WTC11 (cell line): ENCODE measurements at regions of chr11 and their contacts with region 1.

Region 1: GRCh38 chr11:111982019-111982464 is 43.2 kb upstream of the DLAT start:
- DNase-seq: peak; percentile 83
- ATAC-seq: peak; percentile 62
- H3K4me3 Mint-ChIP-seq: peak overlapping the region; percentile 68
- H3K27ac Mint-ChIP-seq: peak overlapping the region; percentile 100
- H3K4me1 Mint-ChIP-seq: peaks cover 50% of the 10 kb centered on the region
- H3K27me3 Mint-ChIP-seq: no peaks in the 10 kb centered on the region
- CTCF ChIP-seq: peak; percentile 51

Region 2: GRCh38 chr11:111870886-111871692 is 111.0 kb before region 1 on chr11 and contains the start of gene ALG9:
- CTCF ChIA-PET with region 1: interaction called, 51 read pairs
- POLR2A ChIA-PET with region 1: interaction called, 6 read pairs
- DNase-seq: peak; percentile 76
- ATAC-seq: peak; percentile 90
- H3K4me3 Mint-ChIP-seq: peak within 1 kb of the TSS; percentile 89
- H3K27ac Mint-ChIP-seq: peak within 1 kb of the TSS; percentile 39
- H3K4me1 Mint-ChIP-seq: peaks cover 12% of the 10 kb centered on the region
- H3K27me3 Mint-ChIP-seq: no peaks in the 10 kb centered on the region; the same call in 1 of the 2 replicates
- CTCF ChIP-seq: no peak
- total RNA-seq, gene ALG9: 19.7 to 20.9 TPM (median 20.6 TPM) in 3 replicates

Region 3: DNA sequence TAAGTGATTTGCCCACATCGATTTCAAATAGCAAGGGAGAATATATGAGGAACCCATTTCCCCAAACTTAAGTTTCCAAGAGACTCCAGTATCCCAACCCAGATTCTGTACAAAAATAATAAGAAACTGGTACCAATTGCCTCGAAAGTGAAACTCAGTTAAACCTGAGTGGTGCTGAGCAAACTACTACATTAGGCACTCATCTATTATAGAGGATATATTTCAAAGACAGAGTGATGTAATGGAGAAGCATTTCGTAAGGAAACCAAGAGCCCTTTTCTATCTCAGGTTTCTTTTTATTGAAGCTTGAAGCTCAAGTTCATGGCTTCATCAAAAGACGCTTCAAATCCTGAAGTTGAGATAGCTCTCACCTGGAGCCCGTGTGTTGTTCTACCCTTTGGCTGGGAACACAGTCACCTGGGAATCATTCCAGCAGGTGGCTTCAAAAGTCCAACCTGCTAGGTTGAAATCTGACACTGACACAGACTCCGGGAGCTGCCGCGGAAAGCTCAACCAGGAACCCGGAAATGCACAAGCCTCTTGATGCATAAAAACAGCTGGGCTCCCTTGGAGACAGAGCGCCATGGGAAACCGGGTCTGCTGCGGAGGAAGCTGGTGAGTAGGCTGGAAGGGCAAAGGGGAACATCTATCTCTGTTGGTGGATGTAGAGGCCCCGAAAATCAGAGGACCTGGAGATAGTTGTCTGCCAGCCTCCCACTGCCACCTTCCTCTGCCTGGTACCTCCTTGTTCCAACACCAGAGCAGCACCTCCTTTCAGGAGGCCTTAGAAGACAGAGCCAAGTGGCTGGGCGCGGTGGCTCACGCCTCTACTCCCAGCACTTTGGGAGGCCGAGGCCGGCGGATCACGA is 63.4 kb before region 1 on chr11 and contains the start of gene C11orf52:
- CTCF ChIA-PET with region 1: interaction called, 34 read pairs
- POLR2A ChIA-PET with region 1: interaction called, 7 read pairs
- DNase-seq: peak; percentile 80
- ATAC-seq: peak; percentile 97
- H3K4me3 Mint-ChIP-seq: peak within 1 kb of the TSS; percentile 57
- H3K27ac Mint-ChIP-seq: peak within 1 kb of the TSS; percentile 85
- H3K4me1 Mint-ChIP-seq: peaks cover 42% of the 10 kb centered on the region
- H3K27me3 Mint-ChIP-seq: no peaks in the 10 kb centered on the region; the same call in 1 of the 2 replicates
- CTCF ChIP-seq: no peak
- total RNA-seq, gene C11orf52: 2.1 to 4.2 TPM (median 3.0 TPM) in 3 replicates

Region 4: GRCh38 chr11:111932611-111932950 is 49.5 kb before region 1 on chr11:
- CTCF ChIA-PET with region 1: interaction called, 159 read pairs
- POLR2A ChIA-PET with region 1: interaction called, 21 read pairs
- DNase-seq: no peak
- ATAC-seq: no peak
- H3K4me3 Mint-ChIP-seq: no peak overlapping the region
- H3K27ac Mint-ChIP-seq: no peak overlapping the region
- H3K4me1 Mint-ChIP-seq: peaks cover 19% of the 10 kb centered on the region
- H3K27me3 Mint-ChIP-seq: no peaks in the 10 kb centered on the region
- CTCF ChIP-seq: no peak

Region 5: GRCh38 chr11:111944651-111945051 is 37.4 kb before region 1 on chr11:
- CTCF ChIA-PET with region 1: interaction called, 121 read pairs
- POLR2A ChIA-PET with region 1: interaction called, 13 read pairs
- DNase-seq: no peak
- ATAC-seq: no peak
- H3K4me3 Mint-ChIP-seq: no peak overlapping the region
- H3K27ac Mint-ChIP-seq: no peak overlapping the region
- H3K4me1 Mint-ChIP-seq: peaks cover 23% of the 10 kb centered on the region
- H3K27me3 Mint-ChIP-seq: no peaks in the 10 kb centered on the region; the same call in 1 of the 2 replicates
- CTCF ChIP-seq: no peak

Region 6: GRCh38 chr11:112004389-112004788 is 22.3 kb after region 1 on chr11:
- CTCF ChIA-PET with region 1: interaction called, 20 read pairs
- POLR2A ChIA-PET with region 1: no interaction called
- DNase-seq: peak; percentile 55
- ATAC-seq: peak; percentile 98
- H3K4me3 Mint-ChIP-seq: no peak overlapping the region
- H3K27ac Mint-ChIP-seq: 0 out of 2 replicates have a peak overlapping the region, but pooled peaks have one; percentile 16
- H3K4me1 Mint-ChIP-seq: peaks cover 8% of the 10 kb centered on the region; the same call in 1 of the 2 replicates
- H3K27me3 Mint-ChIP-seq: peaks cover 31% of the 10 kb centered on the region
- CTCF ChIP-seq: peak; percentile 23; the same call in 1 of the 2 replicates